A549 (cell line): ENCODE measurements at regions of chr7 and their contacts with region 1.

Region 1: GRCh38 chr7:155190688-155191087 is 107.0 kb upstream of the INSIG1 start:
- DNase-seq: peak; percentile 28 to 61
- ATAC-seq: peak; percentile 75 to 87; a peak in 5 of 6 replicates
- H3K4me3 ChIP-seq: peak overlapping the region; percentile 32; the same call in 1 of the 3 replicates
- H3K27ac ChIP-seq: no peak overlapping the region
- H3K4me1 ChIP-seq: no peaks in the 10 kb centered on the region
- CTCF ChIP-seq: peak; percentile 80
- EP300 ChIP-seq: no peak
- POLR2A ChIP-seq: no peak
- RAD21 ChIP-seq: peak; percentile 86 to 89

Region 2: GRCh38 chr7:155213955-155214740 is 23.5 kb after region 1 on chr7:
- CTCF ChIA-PET with region 1: interaction called, 17 read pairs
- POLR2A ChIA-PET with region 1: no interaction called
- DNase-seq: no peak
- ATAC-seq: no peak
- H3K4me3 ChIP-seq: no peak overlapping the region
- H3K27ac ChIP-seq: peak overlapping the region in 1 of 2 experiments; percentile 52; a peak in 3 of 6 replicates
- H3K4me1 ChIP-seq: peaks cover 21% of the 10 kb centered on the region
- CTCF ChIP-seq: no peak
- EP300 ChIP-seq: no peak
- POLR2A ChIP-seq: no peak
- RAD21 ChIP-seq: no peak

Region 3: DNA sequence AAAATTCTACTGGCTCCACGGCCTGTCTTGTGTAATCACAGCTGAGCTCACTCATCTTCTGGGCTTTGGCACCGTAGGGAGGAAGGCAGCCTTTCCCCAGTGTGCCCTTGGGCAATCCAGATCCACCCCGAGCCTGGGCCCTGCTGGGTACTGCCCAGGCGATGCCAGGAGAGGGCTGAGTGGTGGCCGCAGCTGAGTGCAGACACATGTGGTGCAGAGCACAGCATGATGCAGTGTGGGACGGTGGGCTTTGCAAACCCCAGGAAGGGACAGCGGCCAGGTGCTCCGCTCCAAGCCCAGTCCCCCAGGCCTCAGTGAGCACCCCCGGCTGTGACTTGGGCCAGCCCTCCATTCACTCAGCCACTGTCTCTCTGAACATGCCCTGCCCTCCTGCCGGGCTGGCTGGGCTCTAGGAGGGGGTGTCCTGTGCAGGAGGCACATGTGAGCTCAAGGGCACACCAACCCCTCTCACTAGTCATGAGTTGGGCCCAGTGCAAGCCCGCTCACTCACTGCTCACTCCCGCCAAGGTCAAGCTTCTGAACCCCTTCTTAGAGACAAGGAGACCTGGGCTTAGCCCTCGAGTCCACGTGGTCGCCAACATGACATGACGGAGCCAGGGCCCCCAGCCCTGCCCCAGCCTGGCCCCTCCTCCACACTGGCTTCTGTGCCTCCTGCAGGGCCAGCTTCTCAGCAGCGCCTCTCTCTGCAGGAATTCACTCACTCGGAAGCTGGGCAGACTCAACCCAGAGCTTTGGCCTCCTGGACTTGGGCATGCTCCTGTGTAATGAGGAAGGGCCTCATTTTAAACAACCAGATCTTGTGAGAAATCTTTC is 29.5 kb after region 1 on chr7:
- CTCF ChIA-PET with region 1: interaction called, 17 read pairs
- POLR2A ChIA-PET with region 1: no interaction called
- DNase-seq: no peak
- ATAC-seq: peak; percentile 16 to 31; a peak in 1 of 6 replicates
- H3K4me3 ChIP-seq: no peak overlapping the region
- H3K27ac ChIP-seq: no peak overlapping the region
- H3K4me1 ChIP-seq: peaks cover 11% of the 10 kb centered on the region
- CTCF ChIP-seq: no peak
- EP300 ChIP-seq: no peak
- POLR2A ChIP-seq: no peak
- RAD21 ChIP-seq: no peak

Region 4: DNA sequence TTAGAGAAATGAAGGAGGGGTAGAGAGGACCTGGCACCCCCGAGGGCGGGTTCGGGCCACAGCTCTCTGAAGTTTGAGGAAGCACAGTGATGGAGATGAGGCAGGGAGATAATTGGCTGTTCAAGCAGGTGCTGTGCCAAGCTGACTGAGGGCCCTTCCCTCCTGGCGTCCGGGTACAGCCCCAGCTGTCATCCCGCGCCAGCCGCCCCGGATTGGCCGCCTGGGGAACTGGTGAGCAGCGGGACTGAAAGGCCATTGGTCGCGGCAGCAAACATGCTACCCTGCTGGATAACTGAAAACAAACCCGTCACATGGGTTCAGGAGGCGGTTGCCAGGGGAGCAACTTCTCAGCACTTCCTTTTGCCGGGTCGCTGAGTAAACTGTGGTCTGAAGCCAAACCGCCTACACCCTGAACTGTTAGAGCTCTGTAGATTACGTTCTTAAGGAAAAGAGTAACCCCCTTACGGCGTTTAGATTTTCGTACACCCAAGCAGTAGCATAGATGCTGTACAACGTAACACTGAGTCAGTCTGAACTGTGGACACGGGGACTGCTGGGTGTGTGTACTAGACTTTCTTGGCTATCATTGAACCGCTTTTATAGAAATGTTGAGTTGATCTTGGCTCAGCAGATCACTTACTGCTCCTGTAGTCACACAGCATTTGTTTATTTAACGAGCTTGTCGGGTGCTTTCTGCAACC is 108.3 kb after region 1 on chr7:
- CTCF ChIA-PET with region 1: interaction called, 14 read pairs
- POLR2A ChIA-PET with region 1: interaction called, 3 read pairs
- DNase-seq: peak; percentile 93 to 98
- ATAC-seq: peak; percentile 83 to 93
- H3K4me3 ChIP-seq: peak overlapping the region; percentile 90
- H3K27ac ChIP-seq: peak overlapping the region; percentile 98
- H3K4me1 ChIP-seq: peaks cover 23% of the 10 kb centered on the region
- CTCF ChIP-seq: no peak
- EP300 ChIP-seq: no peak
- POLR2A ChIP-seq: no peak
- RAD21 ChIP-seq: no peak

Region 5: DNA sequence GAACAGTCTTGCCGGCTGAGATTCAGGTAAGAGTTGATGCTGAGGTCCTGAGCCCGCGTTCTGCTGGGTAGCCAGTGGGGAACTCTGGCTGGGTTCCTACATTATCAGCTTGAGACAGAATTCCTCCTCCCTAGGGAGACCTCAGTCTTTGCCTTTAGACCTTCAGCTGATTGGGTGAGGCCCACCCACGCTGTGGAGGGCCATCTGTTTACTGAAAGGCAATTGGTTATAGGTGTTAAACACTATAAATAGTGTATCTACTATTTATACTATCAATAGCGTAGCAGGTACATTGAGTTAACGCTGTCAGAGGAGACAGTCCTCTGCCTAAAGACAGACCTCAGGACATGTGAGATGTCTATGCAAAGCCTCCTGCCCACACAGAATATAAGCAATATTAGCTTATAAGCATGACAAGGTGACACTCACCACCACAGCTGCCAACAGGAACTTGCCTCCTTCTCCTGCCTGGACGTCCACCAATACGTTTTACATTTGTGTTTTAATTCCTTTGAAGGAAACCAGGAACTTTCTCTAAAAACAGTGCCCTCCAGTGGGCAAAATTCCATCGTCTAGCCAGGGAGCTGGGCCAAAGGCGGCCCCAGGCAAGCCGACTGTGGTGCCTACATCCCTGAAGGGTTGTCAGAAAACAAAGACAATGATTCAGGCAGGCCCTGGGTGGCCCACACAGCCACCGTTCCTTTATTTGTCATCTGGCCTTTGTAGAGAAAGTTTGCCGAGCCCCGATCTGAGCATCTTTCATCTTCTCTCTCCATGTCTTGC is 165.8 kb after region 1 on chr7:
- CTCF ChIA-PET with region 1: interaction called, 23 read pairs
- POLR2A ChIA-PET with region 1: no interaction called
- DNase-seq: peak; percentile 29 to 43
- ATAC-seq: peak; percentile 58 to 83; a peak in 3 of 6 replicates
- H3K4me3 ChIP-seq: no peak overlapping the region
- H3K27ac ChIP-seq: no peak overlapping the region
- H3K4me1 ChIP-seq: no peaks in the 10 kb centered on the region
- CTCF ChIP-seq: peak; percentile 58
- EP300 ChIP-seq: no peak
- POLR2A ChIP-seq: no peak
- RAD21 ChIP-seq: peak; percentile 36 to 44; a peak in 3 of 5 replicates

Region 6: GRCh38 chr7:155371884-155372781 is 181.4 kb after region 1 on chr7:
- CTCF ChIA-PET with region 1: interaction called, 13 read pairs
- POLR2A ChIA-PET with region 1: no interaction called
- DNase-seq: peak; percentile 29 to 51
- ATAC-seq: peak; percentile 61 to 88; a peak in 5 of 6 replicates
- H3K4me3 ChIP-seq: peak overlapping the region; percentile 37
- H3K27ac ChIP-seq: peak overlapping the region in 1 of 2 experiments; percentile 56; a peak in 3 of 6 replicates
- H3K4me1 ChIP-seq: peaks cover 13% of the 10 kb centered on the region; the same call in 2 of the 3 replicates
- CTCF ChIP-seq: peak; percentile 75
- EP300 ChIP-seq: no peak
- POLR2A ChIP-seq: no peak
- RAD21 ChIP-seq: 0 out of 5 replicates have a peak, but pooled peaks of 1 of the 2 experiments have one; percentile 14